ENCODE measurements at regions of chr10 and their contacts with region 1.

Region 1: DNA sequence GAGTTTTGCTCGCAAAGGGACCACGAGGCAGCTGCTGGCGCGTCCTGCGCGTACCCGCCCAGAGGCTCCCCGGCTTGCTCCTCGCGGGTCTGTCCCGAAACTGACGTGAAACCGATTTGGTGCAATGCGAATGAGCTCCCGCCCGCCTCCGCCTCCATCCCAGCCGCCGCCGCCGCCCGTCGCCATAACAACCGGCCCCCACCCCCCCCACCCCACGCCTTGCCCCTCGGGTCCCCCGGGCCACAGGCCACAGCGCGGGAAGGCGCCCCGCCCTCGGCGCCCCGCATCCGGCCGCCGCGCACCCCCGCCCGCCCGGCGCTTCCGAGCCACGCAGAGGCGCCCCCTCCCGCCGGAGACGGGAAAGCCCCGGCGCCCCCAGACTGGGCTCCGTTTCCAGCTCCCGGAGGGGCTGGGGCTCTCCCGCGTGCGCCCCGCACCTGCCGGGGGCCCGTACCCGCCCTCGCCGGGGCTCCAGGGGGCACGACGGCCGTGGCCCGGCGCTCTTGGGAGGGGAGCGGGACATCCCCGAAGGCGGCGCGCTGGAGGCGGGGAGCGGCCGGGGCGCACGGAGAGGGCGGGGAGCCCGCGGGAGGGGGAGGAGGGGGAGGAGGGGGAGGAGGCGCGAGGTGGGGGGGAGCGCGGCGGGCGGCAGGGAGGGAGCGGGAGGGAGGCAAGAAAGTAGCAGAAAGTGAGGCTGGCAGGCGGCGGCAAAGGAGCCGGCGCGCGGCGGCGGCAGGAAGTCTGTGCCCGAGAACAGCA is at the start of gene CAMK1D:
- DNase-seq: peak; percentile 91 to 94 (median 92)
- H3K4me3 ChIP-seq: peak within 1 kb of the TSS; percentile 40 to 72
- H3K4me3 Mint-ChIP-seq: peak within 1 kb of the TSS; percentile 93 to 100 (median 97)
- H3K27ac ChIP-seq: peak within 1 kb of the TSS; percentile 71
- H3K27ac Mint-ChIP-seq: peak within 1 kb of the TSS; percentile 98 to 99 (median 98)
- H3K4me1 ChIP-seq: peaks cover 25% of the 10 kb centered on the region
- H3K4me1 Mint-ChIP-seq: peaks cover 31 to 54% (median 41%) of the 10 kb centered on the region in 4 donors
- H3K27me3 ChIP-seq: no peaks in the 10 kb centered on the region
- H3K27me3 Mint-ChIP-seq: peaks cover 0 to 6% of the 10 kb centered on the region in 2 donors
- total RNA-seq, gene CAMK1D: 21.9 to 22.2 TPM

Region 2: GRCh38 chr10:12068449-12069269 is 280.4 kb before region 1 on chr10 and contains the start of gene DHTKD1:
- CTCF ChIA-PET with region 1: no interaction called
- POLR2A ChIA-PET with region 1: no interaction called
- intact Hi-C with region 1: loop called (anchors 5 kb)
- DNase-seq: peak; percentile 97 to 98 (median 97)
- H3K4me3 ChIP-seq: peak within 1 kb of the TSS; percentile 52 to 83
- H3K4me3 Mint-ChIP-seq: peak within 1 kb of the TSS; percentile 85 to 93 (median 89)
- H3K27ac ChIP-seq: peak within 1 kb of the TSS; percentile 83
- H3K27ac Mint-ChIP-seq: peak within 1 kb of the TSS; percentile 70 to 97 (median 96)
- H3K4me1 ChIP-seq: peaks cover 16% of the 10 kb centered on the region
- H3K4me1 Mint-ChIP-seq: peaks cover 11 to 24% (median 18%) of the 10 kb centered on the region in 4 donors
- H3K27me3 ChIP-seq: no peaks in the 10 kb centered on the region
- H3K27me3 Mint-ChIP-seq: peaks cover 0 to 2% of the 10 kb centered on the region in 2 donors
- total RNA-seq, gene DHTKD1: 15.7 to 16.5 TPM

Region 3: GRCh38 chr10:12195603-12196506 is 153.2 kb before region 1 on chr10 and contains the starts of genes CDC123 and NUDT5:
- CTCF ChIA-PET with region 1: no interaction called
- POLR2A ChIA-PET with region 1: interaction called, 10 read pairs
- intact Hi-C with region 1: loop called (anchors 1 kb)
- DNase-seq: peak; percentile 85 to 89 (median 88)
- H3K4me3 ChIP-seq: peak within 1 kb of the TSS; percentile 78 to 93
- H3K4me3 Mint-ChIP-seq: peak within 1 kb of the TSS; percentile 95 to 99 (median 98)
- H3K27ac ChIP-seq: peak within 1 kb of the TSS; percentile 96
- H3K27ac Mint-ChIP-seq: peak within 1 kb of the TSS; percentile 97 to 100 (median 99)
- H3K4me1 ChIP-seq: peaks cover 43% of the 10 kb centered on the region
- H3K4me1 Mint-ChIP-seq: peaks cover 36 to 72% (median 54%) of the 10 kb centered on the region in 4 donors
- H3K27me3 ChIP-seq: no peaks in the 10 kb centered on the region
- H3K27me3 Mint-ChIP-seq: no peaks in the 10 kb centered on the region
- total RNA-seq, gene CDC123: 40.7 to 41.8 TPM
- total RNA-seq, gene NUDT5: 55.6 to 61.2 TPM

Region 4: GRCh38 chr10:12364559-12364958 is 15.5 kb after region 1 on chr10:
- CTCF ChIA-PET with region 1: interaction called, 8 read pairs
- POLR2A ChIA-PET with region 1: interaction called, 19 read pairs
- intact Hi-C with region 1: no loop called
- DNase-seq: no peak
- H3K4me3 ChIP-seq: no peak overlapping the region
- H3K4me3 Mint-ChIP-seq: peak overlapping the region in 1 of 8 donors; percentile 2
- H3K27ac ChIP-seq: no peak overlapping the region
- H3K27ac Mint-ChIP-seq: peak overlapping the region in 1 of 7 donors; percentile 35
- H3K4me1 ChIP-seq: peaks cover 19% of the 10 kb centered on the region
- H3K4me1 Mint-ChIP-seq: peaks cover 23 to 48% (median 38%) of the 10 kb centered on the region in 4 donors
- H3K27me3 ChIP-seq: no peaks in the 10 kb centered on the region
- H3K27me3 Mint-ChIP-seq: no peaks in the 10 kb centered on the region

Region 5: GRCh38 chr10:12448729-12449391 is 99.8 kb after region 1 on chr10:
- CTCF ChIA-PET with region 1: no interaction called
- POLR2A ChIA-PET with region 1: interaction called, 14 read pairs
- intact Hi-C with region 1: loop called (anchors 1 kb)
- DNase-seq: peak; percentile 87 to 94 (median 92)
- H3K4me3 ChIP-seq: peak overlapping the region in 1 of 2 donors; percentile 21
- H3K4me3 Mint-ChIP-seq: peak overlapping the region; percentile 36 to 88 (median 81)
- H3K27ac ChIP-seq: peak overlapping the region; percentile 60
- H3K27ac Mint-ChIP-seq: peak overlapping the region; percentile 89 to 99 (median 99)
- H3K4me1 ChIP-seq: peaks cover 14% of the 10 kb centered on the region
- H3K4me1 Mint-ChIP-seq: peaks cover 28 to 58% (median 41%) of the 10 kb centered on the region in 4 donors
- H3K27me3 ChIP-seq: no peaks in the 10 kb centered on the region
- H3K27me3 Mint-ChIP-seq: no peaks in the 10 kb centered on the region

Region 6: GRCh38 chr10:12625393-12626023 is 276.5 kb after region 1 on chr10:
- CTCF ChIA-PET with region 1: no interaction called
- POLR2A ChIA-PET with region 1: no interaction called
- intact Hi-C with region 1: no loop called
- DNase-seq: no peak
- H3K4me3 ChIP-seq: no peak overlapping the region
- H3K4me3 Mint-ChIP-seq: no peak overlapping the region
- H3K27ac ChIP-seq: no peak overlapping the region
- H3K27ac Mint-ChIP-seq: peak overlapping the region in 2 of 7 donors; percentile 47 to 50
- H3K4me1 ChIP-seq: peaks cover 5% of the 10 kb centered on the region
- H3K4me1 Mint-ChIP-seq: peaks cover 10 to 17% (median 15%) of the 10 kb centered on the region in 4 donors
- H3K27me3 ChIP-seq: no peaks in the 10 kb centered on the region
- H3K27me3 Mint-ChIP-seq: no peaks in the 10 kb centered on the region

Measured in CD4-positive, alpha-beta memory T cell (primary cell).